Activated CD8-positive, alpha-beta T cell treated with anti-CD3 and anti-CD28 coated beads, Interleukin-2, amount 10 ng/mL, durations not matched to agents 7 days and 5 days (primary cell): ENCODE measurements at regions of chr2 and their contacts with region 1.

Region 1: DNA sequence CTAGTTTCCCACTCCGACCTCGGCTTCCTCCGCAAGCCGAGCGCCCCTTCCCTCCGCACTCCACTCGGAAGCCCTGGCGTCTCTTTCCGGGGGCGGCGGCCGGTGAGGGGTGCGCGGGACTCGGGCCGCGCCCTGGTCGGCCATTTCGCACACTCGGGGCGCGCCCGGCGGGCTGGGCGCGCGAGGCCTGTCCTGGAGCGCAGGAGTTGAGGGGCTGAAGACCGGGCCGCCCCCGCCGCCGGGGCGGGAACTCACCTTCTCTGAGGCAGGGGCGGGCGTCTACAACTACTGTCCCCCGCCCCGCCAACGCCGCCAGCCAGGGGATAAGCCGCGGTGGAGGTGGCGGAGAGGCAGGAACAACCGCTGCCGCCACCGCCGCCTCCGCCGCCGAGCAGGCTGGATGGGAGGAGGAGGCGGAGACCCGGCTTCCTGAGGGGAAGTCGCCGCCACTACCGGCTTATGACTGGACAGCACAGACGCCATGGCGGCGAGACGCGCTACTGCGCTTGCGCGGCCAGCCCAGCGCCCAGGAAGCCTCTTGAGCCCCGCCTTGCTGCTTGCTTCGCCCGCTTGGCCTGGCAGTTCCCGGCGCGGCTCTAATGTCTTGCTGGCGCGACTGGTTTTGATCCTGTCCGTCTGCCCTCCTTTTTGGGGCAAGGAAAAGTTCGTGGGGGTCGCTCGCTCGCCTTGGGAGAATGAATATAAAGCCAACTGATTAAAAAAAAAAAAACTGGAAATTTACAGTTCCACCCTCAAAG is at the start of gene KRCC1:
- DNase-seq: peak; percentile 95
- ATAC-seq: peak; percentile 97
- H3K4me3 Mint-ChIP-seq: peak within 1 kb of the TSS; percentile 98
- H3K27ac Mint-ChIP-seq: peak within 1 kb of the TSS; percentile 98
- H3K4me1 Mint-ChIP-seq: peaks cover 56% of the 10 kb centered on the region
- H3K27me3 Mint-ChIP-seq: no peaks in the 10 kb centered on the region
- total RNA-seq, gene KRCC1: 18.9 to 20.4 TPM

Region 2: GRCh38 chr2:88016086-88016959 is 39.2 kb before region 1 on chr2 and contains the start of gene RNU2-63P:
- CTCF ChIA-PET with region 1: interaction called, 5 read pairs
- POLR2A ChIA-PET with region 1: interaction called, 26 read pairs
- DNase-seq: peak; percentile 81
- ATAC-seq: peak; percentile 83
- H3K4me3 Mint-ChIP-seq: peak within 1 kb of the TSS; percentile 98
- H3K27ac Mint-ChIP-seq: peak within 1 kb of the TSS; percentile 99
- H3K4me1 Mint-ChIP-seq: peaks cover 28% of the 10 kb centered on the region
- H3K27me3 Mint-ChIP-seq: no peaks in the 10 kb centered on the region
- total RNA-seq, gene RNU2-63P: 4.5 to 7.0 TPM

Region 3: DNA sequence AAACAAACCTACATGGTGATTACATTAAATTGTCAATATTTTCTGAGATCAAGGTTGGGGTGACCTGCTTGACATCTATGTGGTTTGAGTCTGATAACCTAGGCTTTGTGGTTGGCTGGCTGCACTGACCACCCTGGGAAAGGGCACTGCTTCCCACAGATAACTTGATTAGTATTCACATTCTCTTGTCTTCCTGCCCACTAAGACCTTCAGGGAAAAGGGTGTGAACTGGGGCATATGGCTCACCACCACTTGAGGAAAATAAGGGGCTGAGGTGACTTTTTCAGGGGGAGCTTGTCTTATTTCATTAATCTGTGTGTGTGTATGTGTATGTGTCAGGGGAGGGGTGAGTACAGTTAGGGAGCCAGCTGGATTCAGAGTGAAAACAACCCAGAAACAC is 13.6 kb after region 1 on chr2:
- CTCF ChIA-PET with region 1: interaction called, 15 read pairs
- POLR2A ChIA-PET with region 1: no interaction called
- DNase-seq: no peak
- ATAC-seq: no peak
- H3K4me3 Mint-ChIP-seq: no peak overlapping the region
- H3K27ac Mint-ChIP-seq: no peak overlapping the region
- H3K4me1 Mint-ChIP-seq: no peaks in the 10 kb centered on the region
- H3K27me3 Mint-ChIP-seq: no peaks in the 10 kb centered on the region

Region 4: DNA sequence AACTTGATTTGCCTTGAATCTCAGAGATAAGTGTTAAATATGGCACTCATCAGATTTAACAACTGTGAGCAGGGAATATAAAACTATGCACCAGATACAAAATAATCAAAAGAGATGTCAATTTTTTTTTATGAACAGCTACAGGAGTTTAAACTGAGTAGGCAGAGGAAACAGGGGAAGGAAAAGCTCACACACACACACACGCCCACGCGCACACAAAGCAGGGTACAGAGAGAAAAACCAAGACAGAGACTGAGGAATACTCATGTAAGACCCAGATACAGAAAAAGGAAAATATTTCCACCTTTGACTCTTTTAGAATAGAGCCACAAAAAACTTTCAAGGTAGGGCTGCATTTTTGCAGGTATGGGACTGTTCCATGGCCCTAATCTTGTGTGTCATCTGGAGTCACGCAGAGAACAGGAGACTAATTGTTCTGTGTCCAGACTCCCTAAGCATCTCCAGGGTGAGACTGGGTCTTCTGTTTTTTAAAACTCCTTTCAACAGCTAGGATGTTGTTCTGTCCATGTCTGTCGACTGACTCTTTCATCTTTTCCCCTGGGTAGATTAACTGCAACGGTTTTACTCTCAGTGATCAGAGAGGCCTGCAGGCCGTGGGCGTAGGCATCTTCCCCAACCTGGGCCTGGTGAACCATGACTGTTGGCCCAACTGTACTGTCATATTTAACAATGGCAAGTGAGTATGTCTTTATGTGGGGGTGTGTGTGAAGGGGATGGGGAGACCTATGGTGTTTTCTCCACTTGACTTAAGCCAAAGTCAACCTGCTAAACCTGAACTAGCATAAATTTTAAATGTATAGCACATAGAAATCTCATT is 35.1 kb after region 1 on chr2:
- CTCF ChIA-PET with region 1: interaction called, 10 read pairs
- POLR2A ChIA-PET with region 1: no interaction called
- DNase-seq: no peak
- ATAC-seq: no peak
- H3K4me3 Mint-ChIP-seq: no peak overlapping the region
- H3K27ac Mint-ChIP-seq: no peak overlapping the region
- H3K4me1 Mint-ChIP-seq: peaks cover 7% of the 10 kb centered on the region
- H3K27me3 Mint-ChIP-seq: no peaks in the 10 kb centered on the region

Region 5: DNA sequence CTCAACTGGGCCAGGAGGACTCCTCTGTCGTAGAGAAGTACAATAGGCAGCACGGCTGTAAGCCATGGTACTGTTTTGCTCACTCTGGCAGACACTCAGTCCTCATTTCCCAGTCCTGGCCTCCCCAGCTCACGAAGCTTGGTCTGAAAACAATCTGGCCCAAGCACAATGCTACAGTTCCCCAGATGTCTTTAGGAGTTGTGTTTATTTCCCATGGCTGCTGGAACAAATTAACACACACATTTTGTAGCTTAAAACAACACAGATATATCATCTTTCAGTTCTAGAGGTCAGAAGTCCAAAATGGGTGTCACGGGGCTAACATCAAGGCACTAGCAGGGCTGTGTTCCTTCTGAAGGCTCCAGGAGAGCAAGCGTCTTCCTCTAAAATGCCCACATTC is 59.3 kb after region 1 on chr2:
- CTCF ChIA-PET with region 1: no interaction called
- POLR2A ChIA-PET with region 1: no interaction called
- DNase-seq: no peak
- ATAC-seq: no peak
- H3K4me3 Mint-ChIP-seq: no peak overlapping the region
- H3K27ac Mint-ChIP-seq: no peak overlapping the region
- H3K4me1 Mint-ChIP-seq: no peaks in the 10 kb centered on the region
- H3K27me3 Mint-ChIP-seq: no peaks in the 10 kb centered on the region

Region 6: DNA sequence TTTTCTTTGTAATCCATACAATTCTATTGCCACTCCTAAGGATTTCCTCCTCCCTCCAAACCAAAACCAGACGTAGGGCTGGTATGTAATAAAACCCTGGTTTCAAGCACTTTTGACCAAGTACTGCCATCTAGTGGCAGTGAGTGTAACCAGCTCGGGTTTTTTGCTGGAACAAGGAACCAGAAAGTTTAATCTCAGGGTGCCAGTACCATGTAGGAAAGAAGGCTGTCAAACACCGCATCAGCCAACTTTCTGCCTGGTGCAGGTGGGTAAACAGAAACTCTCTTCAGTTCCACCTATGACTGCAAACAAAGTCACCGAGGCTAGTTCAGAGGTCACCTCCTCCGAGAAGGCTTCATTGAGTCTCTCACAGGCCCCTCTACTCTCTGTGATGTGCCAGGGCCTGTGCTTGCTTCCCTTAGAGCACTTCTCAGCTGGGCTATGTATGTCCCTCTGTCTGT is 104.4 kb after region 1 on chr2:
- CTCF ChIA-PET with region 1: interaction called, 135 read pairs
- POLR2A ChIA-PET with region 1: no interaction called
- DNase-seq: peak; percentile 66
- ATAC-seq: peak; percentile 47
- H3K4me3 Mint-ChIP-seq: no peak overlapping the region
- H3K27ac Mint-ChIP-seq: no peak overlapping the region
- H3K4me1 Mint-ChIP-seq: no peaks in the 10 kb centered on the region
- H3K27me3 Mint-ChIP-seq: peaks cover 8% of the 10 kb centered on the region

Region 7: GRCh38 chr2:88190808-88191721 is 135.5 kb after region 1 on chr2:
- CTCF ChIA-PET with region 1: interaction called, 31 read pairs
- POLR2A ChIA-PET with region 1: no interaction called
- DNase-seq: peak; percentile 30
- ATAC-seq: no peak
- H3K4me3 Mint-ChIP-seq: no peak overlapping the region
- H3K27ac Mint-ChIP-seq: no peak overlapping the region
- H3K4me1 Mint-ChIP-seq: no peaks in the 10 kb centered on the region
- H3K27me3 Mint-ChIP-seq: peaks cover 3% of the 10 kb centered on the region